Caco-2 (cell line): ENCODE measurements at regions of chr12 and their contacts with region 1.

Region 1: GRCh38 chr12:2884810-2885209 is 5.9 kb upstream of the TULP3 start:
- DNase-seq: no peak
- H3K4me3 ChIP-seq: no peak overlapping the region
- H3K4me3 Mint-ChIP-seq: no peak overlapping the region
- H3K27ac Mint-ChIP-seq: no peak overlapping the region
- H3K4me1 ChIP-seq: peaks cover under 1% of the 10 kb centered on the region; the same call in 1 of the 2 replicates
- H3K4me1 Mint-ChIP-seq: peaks cover 7% of the 10 kb centered on the region
- H3K27me3 ChIP-seq: no peaks in the 10 kb centered on the region
- H3K27me3 Mint-ChIP-seq: no peaks in the 10 kb centered on the region
- CTCF ChIP-seq: no peak

Region 2: DNA sequence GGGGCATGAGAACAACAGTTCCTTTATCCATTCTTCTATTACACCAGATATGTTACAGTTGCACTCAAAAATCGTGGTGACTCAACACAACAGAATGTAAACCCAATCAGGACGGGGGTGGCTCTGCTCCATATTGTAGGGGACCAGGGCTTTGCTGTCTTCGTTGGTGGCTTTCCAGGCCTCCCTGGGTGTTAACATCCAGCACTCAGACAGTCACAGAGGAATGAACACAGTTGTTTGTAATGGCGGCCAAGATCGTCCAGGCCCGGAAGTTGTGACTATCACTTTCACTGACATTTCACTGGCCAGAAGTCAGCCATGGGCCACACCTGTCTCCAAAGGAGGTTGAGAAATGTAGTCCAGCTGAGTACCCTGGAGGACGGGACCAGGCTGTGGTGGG is 627.9 kb before region 1 on chr12:
- CTCF ChIA-PET with region 1: no interaction called
- POLR2A ChIA-PET with region 1: no interaction called
- intact Hi-C with region 1: no loop called
- DNase-seq: no peak
- H3K4me3 ChIP-seq: no peak overlapping the region
- H3K4me3 Mint-ChIP-seq: no peak overlapping the region
- H3K27ac Mint-ChIP-seq: no peak overlapping the region
- H3K4me1 ChIP-seq: no peaks in the 10 kb centered on the region
- H3K4me1 Mint-ChIP-seq: no peaks in the 10 kb centered on the region
- H3K27me3 ChIP-seq: no peaks in the 10 kb centered on the region
- H3K27me3 Mint-ChIP-seq: peaks cover 13% of the 10 kb centered on the region
- CTCF ChIP-seq: no peak

Region 3: GRCh38 chr12:2944401-2945047 is 59.7 kb after region 1 on chr12:
- CTCF ChIA-PET with region 1: interaction called, 25 read pairs
- POLR2A ChIA-PET with region 1: no interaction called
- intact Hi-C with region 1: loop called (anchors 1 kb)
- DNase-seq: peak; percentile 83 to 86
- H3K4me3 ChIP-seq: no peak overlapping the region
- H3K4me3 Mint-ChIP-seq: peak overlapping the region; percentile 59
- H3K27ac Mint-ChIP-seq: no peak overlapping the region
- H3K4me1 ChIP-seq: no peaks in the 10 kb centered on the region
- H3K4me1 Mint-ChIP-seq: no peaks in the 10 kb centered on the region
- H3K27me3 ChIP-seq: no peaks in the 10 kb centered on the region
- H3K27me3 Mint-ChIP-seq: no peaks in the 10 kb centered on the region
- CTCF ChIP-seq: peak; percentile 91 to 95

Region 4: DNA sequence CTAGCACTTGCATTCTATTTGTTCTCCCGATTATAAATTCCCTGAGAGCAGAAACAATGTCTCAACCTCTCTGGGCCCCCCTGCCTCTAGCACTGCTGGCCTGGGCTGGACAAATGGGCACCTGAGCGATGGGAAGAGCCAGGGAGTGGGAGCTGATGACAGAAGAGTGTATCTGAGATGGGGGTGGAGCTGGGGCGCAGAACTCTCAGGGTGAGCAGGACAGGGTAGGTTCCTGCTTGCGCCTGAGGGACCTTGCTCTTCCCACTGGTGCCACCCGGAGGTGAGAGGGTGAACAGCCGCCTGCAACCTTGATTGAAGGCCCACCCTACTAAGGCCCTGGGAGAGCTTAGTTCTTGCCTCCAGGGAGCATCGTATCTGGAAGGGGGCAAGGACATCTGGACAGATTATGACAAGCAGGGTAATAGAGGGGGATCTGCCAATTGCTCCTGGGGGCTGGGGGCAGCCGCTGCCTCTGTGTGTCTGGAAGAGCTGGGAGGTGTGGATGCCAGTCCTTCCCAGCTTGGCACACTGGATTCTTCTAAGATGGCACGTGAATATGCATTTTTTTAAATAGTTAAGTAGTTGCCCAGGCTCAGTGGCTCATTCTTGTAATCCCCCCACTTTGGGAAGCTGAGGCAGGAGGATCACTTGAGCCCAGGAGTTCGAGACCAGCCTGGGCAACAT is 149.4 kb after region 1 on chr12:
- CTCF ChIA-PET with region 1: interaction called, 27 read pairs
- POLR2A ChIA-PET with region 1: interaction called, 3 read pairs
- intact Hi-C with region 1: no loop called
- DNase-seq: peak; percentile 87 to 89
- H3K4me3 ChIP-seq: no peak overlapping the region
- H3K4me3 Mint-ChIP-seq: no peak overlapping the region
- H3K27ac Mint-ChIP-seq: peak overlapping the region; percentile 43
- H3K4me1 ChIP-seq: no peaks in the 10 kb centered on the region
- H3K4me1 Mint-ChIP-seq: no peaks in the 10 kb centered on the region
- H3K27me3 ChIP-seq: no peaks in the 10 kb centered on the region
- H3K27me3 Mint-ChIP-seq: no peaks in the 10 kb centered on the region
- CTCF ChIP-seq: peak; percentile 84 to 96

Region 5: DNA sequence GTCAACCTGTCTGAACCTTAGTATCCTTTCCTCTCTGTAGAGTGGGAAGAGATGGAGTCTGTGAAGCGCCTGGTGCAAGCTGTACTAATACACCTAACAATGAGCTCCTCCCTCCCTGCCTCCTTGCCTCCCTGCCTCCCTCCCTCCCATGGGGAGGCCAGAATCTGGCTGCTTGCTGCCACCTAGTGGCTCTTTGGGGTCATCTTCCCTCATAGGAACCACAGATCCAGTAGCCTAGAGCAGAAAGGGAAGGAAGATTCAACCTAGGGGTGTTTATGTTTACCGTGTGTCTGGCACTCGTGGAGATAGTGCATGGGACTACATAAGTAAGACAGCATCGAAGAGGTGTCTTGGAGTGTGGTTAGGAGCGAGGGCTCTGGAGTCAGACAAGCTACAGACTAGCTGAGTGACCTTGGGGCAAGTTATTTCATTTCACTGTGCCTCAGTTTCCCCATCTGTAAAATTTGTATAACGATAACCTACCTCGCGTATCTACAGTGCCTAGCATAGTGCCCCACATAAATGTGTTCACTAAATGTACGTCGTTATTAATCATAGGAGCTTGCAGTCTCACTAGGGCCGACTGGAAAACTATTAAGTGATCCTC is 156.9 kb after region 1 on chr12:
- CTCF ChIA-PET with region 1: interaction called, 11 read pairs
- POLR2A ChIA-PET with region 1: no interaction called
- intact Hi-C with region 1: loop called (anchors 1 kb)
- DNase-seq: peak; percentile 84 to 86
- H3K4me3 ChIP-seq: no peak overlapping the region
- H3K4me3 Mint-ChIP-seq: no peak overlapping the region
- H3K27ac Mint-ChIP-seq: no peak overlapping the region
- H3K4me1 ChIP-seq: no peaks in the 10 kb centered on the region
- H3K4me1 Mint-ChIP-seq: no peaks in the 10 kb centered on the region
- H3K27me3 ChIP-seq: no peaks in the 10 kb centered on the region
- H3K27me3 Mint-ChIP-seq: no peaks in the 10 kb centered on the region
- CTCF ChIP-seq: peak; percentile 83 to 84